Endothelial cell of umbilical vein (primary cell): ENCODE measurements at regions of chr12 and their contacts with region 1.

Region 1: GRCh38 chr12:95336390-95337067 is 118.9 kb downstream of the VEZT start:
- DNase-seq: peak; percentile 91
- H3K4me3 ChIP-seq: peak overlapping the region in 1 of 3 experiments; percentile 27
- H3K27ac ChIP-seq: peak overlapping the region; percentile 50
- H3K4me1 ChIP-seq: peaks cover 11% of the 10 kb centered on the region
- H3K27me3 ChIP-seq: no peaks in the 10 kb centered on the region
- CTCF ChIP-seq: peak; percentile 93 to 98
- POLR2A ChIP-seq: no peak

Region 2: DNA sequence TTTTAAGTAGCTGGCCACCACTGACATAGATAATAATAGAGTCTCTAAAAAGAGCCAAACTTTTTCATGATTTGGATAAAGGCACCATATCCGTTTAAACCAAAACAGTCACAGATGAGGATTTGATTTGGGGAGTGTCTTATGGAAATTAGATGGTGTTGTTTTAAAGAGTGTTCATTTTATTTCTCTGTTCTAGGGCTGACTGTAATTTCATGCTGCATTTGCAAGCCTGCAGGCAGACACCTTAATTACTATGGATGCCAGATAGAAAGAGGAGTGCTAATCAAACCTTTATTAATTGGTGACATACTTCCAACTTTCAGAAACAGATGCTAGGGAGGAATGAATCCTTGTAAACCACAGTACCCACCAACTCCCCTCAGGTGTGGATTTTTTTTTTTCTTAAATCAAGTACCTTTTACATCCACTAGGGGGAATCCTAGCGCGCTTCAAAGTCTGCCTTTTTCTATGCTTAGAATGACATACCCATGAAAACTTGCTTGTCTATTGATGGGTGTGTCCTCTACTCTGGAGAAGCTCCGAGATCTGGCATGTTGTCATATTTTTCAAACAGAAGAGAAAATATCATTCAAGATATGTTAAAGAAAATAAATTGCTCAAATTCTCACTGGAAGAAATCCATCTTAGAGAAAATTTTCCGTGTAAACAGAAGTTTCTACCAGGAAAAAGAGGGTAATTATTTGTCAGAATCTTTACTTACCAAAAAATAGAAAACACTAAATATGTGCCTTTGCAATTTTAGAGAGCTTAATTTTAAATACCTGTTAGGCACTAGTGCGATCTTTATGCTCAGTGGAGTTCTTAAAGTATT is 1202.3 kb before region 1 on chr12:
- CTCF ChIA-PET with region 1: no interaction called
- POLR2A ChIA-PET with region 1: no interaction called
- dilution Hi-C with region 1: no loop called
- intact Hi-C with region 1: loop called (anchors 10 kb)
- DNase-seq: peak; percentile 56
- H3K4me3 ChIP-seq: no peak overlapping the region
- H3K27ac ChIP-seq: no peak overlapping the region
- H3K4me1 ChIP-seq: no peaks in the 10 kb centered on the region
- H3K27me3 ChIP-seq: peaks cover 8 to 9% of the 10 kb centered on the region in 2 experiments
- CTCF ChIP-seq: peak; percentile 40 to 58
- POLR2A ChIP-seq: no peak

Region 3: GRCh38 chr12:94769047-94769420 is 567.5 kb before region 1 on chr12:
- CTCF ChIA-PET with region 1: no interaction called
- POLR2A ChIA-PET with region 1: no interaction called
- dilution Hi-C with region 1: no loop called
- intact Hi-C with region 1: loop called (anchors 2 kb)
- DNase-seq: peak; percentile 52
- H3K4me3 ChIP-seq: no peak overlapping the region
- H3K27ac ChIP-seq: no peak overlapping the region
- H3K4me1 ChIP-seq: peaks cover 13% of the 10 kb centered on the region
- H3K27me3 ChIP-seq: no peaks in the 10 kb centered on the region
- CTCF ChIP-seq: no peak
- POLR2A ChIP-seq: no peak

Region 4: DNA sequence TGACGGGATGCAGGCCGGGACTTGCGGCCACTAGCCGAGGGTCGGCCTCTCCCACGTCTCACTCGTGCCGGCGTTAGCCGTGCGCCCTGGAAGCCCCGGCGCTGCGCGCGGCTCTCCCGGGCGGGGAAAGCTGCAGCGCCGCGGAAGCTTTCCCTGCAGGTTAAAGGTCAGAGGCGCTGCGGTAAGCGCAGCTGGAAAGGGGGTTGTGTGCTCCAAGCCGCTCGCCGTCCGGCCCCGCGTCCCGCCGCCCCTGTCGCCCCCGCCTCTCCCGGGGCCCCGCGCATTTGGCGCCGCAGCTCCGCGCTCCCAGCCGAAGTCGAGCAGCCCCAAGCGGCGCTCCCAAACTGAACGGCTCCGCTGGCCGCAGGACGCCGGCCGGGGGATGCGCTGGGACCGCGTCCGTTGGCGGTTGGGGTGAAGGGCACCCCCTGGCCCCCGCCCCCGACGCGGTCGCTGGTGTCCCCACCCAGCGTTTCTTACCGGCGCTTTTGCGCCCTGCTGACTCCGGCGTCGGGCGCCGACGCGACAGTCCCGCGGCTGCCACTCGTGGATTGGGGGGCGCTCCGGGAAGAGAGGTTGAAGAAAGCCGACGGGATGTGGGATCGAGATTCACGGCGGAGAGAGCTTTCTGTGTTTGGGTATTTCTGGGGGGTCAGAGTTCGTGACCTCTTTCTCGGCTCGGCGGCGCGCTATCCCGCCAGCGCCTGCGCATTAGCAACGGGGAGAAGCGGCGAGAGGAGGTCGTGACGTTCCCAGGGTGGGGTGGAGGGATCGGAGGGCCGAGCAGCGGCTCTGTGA is 263.4 kb before region 1 on chr12 and contains the start of gene NR2C1:
- CTCF ChIA-PET with region 1: interaction called, 27 read pairs
- POLR2A ChIA-PET with region 1: no interaction called
- dilution Hi-C with region 1: no loop called
- intact Hi-C with region 1: no loop called
- DNase-seq: peak; percentile 91
- H3K4me3 ChIP-seq: peak within 1 kb of the TSS; percentile 72 to 88 (median 87)
- H3K27ac ChIP-seq: peak within 1 kb of the TSS; percentile 79
- H3K4me1 ChIP-seq: peaks cover 4% of the 10 kb centered on the region
- H3K27me3 ChIP-seq: no peaks in the 10 kb centered on the region
- CTCF ChIP-seq: no peak
- POLR2A ChIP-seq: peak; percentile 47
- total RNA-seq, gene NR2C1: 36.3 and 37.7 TPM in 2 replicates

Region 5: DNA sequence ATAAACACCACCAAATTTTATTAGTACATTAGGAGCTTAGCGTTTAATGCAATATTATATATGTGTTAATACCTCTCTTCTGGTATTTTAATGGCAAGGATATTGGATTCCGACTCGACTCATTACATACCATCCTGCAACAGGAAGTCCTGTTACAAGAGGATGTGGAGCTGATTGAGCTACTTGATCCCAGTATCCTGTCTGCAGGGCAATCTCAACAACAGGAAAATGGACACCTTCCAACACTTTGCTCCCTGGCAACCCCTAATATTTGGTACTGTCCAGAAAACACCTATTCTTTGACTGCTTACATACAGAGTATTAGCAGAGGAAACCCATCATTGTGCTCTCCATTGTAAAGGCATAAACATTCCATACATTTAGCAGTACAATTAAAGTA is 73.7 kb before region 1 on chr12:
- CTCF ChIA-PET with region 1: interaction called, 7 read pairs
- POLR2A ChIA-PET with region 1: no interaction called
- dilution Hi-C with region 1: no loop called
- intact Hi-C with region 1: loop called (anchors 1 kb)
- DNase-seq: peak; percentile 98
- H3K4me3 ChIP-seq: peak overlapping the region in 1 of 3 experiments; percentile 20
- H3K27ac ChIP-seq: peak overlapping the region; percentile 93
- H3K4me1 ChIP-seq: peaks cover 39% of the 10 kb centered on the region
- H3K27me3 ChIP-seq: no peaks in the 10 kb centered on the region
- CTCF ChIP-seq: no peak
- POLR2A ChIP-seq: no peak

Region 6: DNA sequence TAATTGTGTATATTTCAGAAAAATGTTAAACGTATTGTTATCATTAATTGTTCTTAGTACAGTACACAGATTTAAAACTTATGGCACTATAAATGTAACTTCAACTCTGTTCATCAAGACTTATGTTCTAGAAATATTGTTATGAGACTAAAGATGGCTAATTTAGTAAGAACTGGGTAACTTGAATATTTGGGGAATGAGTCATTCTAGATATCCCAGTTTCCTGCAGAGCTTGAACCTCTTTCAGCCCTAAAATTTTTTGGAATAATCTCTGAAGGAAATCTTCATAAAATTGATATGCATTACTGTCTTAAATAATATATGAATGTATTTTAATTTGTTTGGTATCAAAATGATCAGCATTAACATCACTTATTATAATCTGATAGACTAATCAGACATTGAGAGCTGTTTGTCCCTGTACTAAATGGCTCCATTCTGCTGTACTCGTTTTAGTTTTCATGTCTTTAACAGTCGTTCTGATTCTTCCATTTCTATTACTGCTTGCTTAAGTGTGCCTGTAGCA is 31.8 kb before region 1 on chr12:
- CTCF ChIA-PET with region 1: interaction called, 10 read pairs
- POLR2A ChIA-PET with region 1: no interaction called
- dilution Hi-C with region 1: no loop called
- intact Hi-C with region 1: no loop called
- DNase-seq: no peak
- H3K4me3 ChIP-seq: no peak overlapping the region
- H3K27ac ChIP-seq: no peak overlapping the region
- H3K4me1 ChIP-seq: peaks cover 34% of the 10 kb centered on the region
- H3K27me3 ChIP-seq: no peaks in the 10 kb centered on the region
- CTCF ChIP-seq: no peak
- POLR2A ChIP-seq: no peak

Region 7: GRCh38 chr12:95380997-95381786 is 44.7 kb after region 1 on chr12:
- CTCF ChIA-PET with region 1: no interaction called
- POLR2A ChIA-PET with region 1: no interaction called
- dilution Hi-C with region 1: no loop called
- intact Hi-C with region 1: no loop called
- DNase-seq: no peak
- H3K4me3 ChIP-seq: no peak overlapping the region
- H3K27ac ChIP-seq: no peak overlapping the region
- H3K4me1 ChIP-seq: no peaks in the 10 kb centered on the region
- H3K27me3 ChIP-seq: no peaks in the 10 kb centered on the region
- CTCF ChIP-seq: no peak
- POLR2A ChIP-seq: no peak

Region 8: GRCh38 chr12:95637471-95638155 is 301.1 kb after region 1 on chr12:
- CTCF ChIA-PET with region 1: no interaction called
- POLR2A ChIA-PET with region 1: no interaction called
- dilution Hi-C with region 1: no loop called
- intact Hi-C with region 1: no loop called
- DNase-seq: peak; percentile 100
- H3K4me3 ChIP-seq: no peak overlapping the region
- H3K27ac ChIP-seq: peak overlapping the region; percentile 99
- H3K4me1 ChIP-seq: peaks cover 51% of the 10 kb centered on the region
- H3K27me3 ChIP-seq: no peaks in the 10 kb centered on the region
- CTCF ChIP-seq: no peak
- POLR2A ChIP-seq: peak; percentile 64